ENCODE measurements at regions of chr1 and their contacts with region 1.

Region 1: DNA sequence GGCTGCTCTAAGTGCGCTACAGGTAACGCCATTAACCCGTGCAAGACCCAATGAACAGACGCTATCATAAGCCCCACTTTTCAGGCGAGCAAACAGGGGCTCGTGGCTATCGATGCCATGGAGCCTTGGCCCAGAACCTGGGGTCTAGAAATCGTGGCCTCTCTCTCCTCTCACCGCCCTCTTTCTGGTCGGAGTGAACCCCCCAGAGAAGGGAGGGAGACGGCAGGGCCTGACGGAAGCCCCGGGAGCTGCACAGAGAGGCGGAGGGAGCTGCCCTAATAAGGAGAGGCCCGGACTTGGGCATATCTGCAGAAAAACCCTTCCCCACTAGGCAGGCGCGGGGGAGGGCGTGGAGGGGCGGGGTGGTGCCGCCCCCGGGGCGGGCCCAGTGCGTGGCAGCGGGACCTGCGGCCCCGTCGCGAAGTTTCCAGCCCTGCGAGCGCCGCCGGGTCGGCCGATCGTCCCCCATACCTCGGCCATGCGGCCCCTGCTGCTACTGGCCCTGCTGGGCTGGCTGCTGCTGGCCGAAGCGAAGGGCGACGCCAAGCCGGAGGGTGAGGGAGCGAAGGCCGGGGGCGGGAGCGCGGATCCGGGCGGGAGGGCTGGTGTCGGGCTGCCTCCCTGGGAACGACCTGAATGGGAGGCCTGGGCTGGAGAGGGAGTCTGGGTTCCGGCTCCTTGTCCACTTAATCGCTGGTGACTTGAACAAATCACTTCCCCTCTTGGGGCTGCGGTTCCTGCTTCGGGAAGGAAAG is at the start of gene PLOD1:
- DNase-seq: peak; percentile 85 to 89
- H3K4me3 ChIP-seq: peak within 1 kb of the TSS; percentile 29 to 93 (median 47)
- H3K27ac ChIP-seq: peak within 1 kb of the TSS; percentile 78 to 92 (median 80)
- H3K4me1 ChIP-seq: peaks cover 3 to 37% of the 10 kb centered on the region in 2 donors
- H3K27me3 ChIP-seq: no peaks in the 10 kb centered on the region
- CTCF ChIP-seq: no peak
- POLR2A ChIP-seq: peak in 1 of 2 donors; percentile 87
- total RNA-seq, gene PLOD1: 64.4 to 107 (median 80.8) TPM

Region 2: DNA sequence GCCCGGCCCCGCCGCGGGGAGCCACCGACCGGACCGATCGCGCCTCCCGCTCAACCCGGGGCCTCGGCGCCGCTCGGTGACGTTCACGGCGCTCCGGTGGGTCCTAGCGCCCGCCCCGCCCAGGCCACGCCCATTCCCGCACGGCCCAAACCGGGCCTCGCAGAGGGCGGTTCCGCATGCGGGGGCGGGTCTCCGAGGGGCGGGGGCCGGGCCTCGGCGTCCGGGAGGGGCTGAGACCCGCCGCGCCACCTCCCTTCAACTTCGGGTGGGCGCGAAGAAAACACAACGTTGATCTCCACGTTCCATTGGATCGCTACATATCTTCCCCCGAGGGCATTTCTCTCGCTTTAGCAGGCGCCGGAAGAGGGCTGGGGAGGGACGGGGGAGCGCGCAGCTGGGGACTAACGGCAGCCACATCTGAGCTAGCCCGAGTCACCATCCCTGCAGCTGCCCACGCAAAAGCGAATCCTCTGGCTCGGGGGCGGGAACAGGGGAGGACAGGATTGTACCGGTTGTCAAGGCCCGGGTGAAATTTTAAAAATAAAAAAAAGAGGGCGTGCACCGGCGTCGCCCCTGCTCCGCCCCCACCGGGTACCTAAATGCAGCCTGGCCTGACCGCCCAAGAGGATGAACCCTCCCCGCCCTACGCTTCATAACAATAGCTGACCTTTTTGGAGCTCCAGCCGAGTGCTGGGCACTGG is 253.3 kb before region 1 on chr1 and contains the start of gene MAD2L2:
- intact Hi-C with region 1: no loop called
- DNase-seq: peak; percentile 82
- H3K4me3 ChIP-seq: peak within 1 kb of the TSS; percentile 62 to 83 (median 79)
- H3K27ac ChIP-seq: peak within 1 kb of the TSS; percentile 44 to 74 (median 68)
- H3K4me1 ChIP-seq: peaks cover 7 to 10% of the 10 kb centered on the region in 2 donors
- H3K27me3 ChIP-seq: no peaks in the 10 kb centered on the region
- CTCF ChIP-seq: no peak
- POLR2A ChIP-seq: peak in 1 of 2 donors; percentile 48
- total RNA-seq, gene MAD2L2: 12.0 to 43.9 (median 21.5) TPM

Region 3: DNA sequence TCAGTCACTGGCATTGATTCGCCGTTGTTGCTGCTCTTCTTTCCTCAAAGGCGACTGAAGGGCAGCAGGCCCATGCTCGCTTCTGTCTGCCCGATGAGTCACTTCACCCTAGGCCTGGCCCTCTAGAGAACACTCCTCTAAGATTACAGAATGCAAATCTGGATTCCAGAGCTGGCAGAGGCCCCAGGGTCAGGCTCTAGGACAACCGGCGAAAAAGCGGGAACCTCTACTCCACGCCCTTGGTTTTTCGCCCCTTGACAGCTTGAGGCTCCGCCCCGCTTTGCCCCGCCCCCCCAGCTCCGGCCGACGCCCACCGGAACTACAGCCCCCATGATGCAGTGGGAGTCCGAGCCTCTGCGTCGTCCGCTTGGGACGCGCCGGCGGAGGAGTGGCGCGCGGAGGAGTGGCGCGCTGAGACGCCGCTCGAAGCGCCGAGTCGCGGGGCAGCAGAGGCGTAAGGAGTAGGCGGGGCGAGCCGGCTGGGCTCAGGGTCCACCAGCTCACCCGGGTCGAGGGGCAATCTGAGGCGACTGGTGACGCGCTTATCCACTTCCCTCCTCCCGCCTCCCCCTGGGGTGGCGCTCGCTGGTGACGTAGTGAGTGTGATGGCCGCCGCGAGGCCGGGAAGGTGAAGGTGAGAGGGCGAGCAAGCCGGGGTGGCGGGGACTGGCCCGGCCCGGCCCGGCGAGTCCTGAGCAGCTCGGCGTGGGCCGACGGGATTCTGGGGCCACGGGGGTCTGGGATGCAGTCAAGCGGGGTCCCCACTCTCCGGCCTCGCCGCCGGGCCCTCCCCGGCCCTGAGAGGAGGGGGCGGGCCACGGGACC is 45.6 kb after region 1 on chr1 and contains the start of gene MFN2:
- intact Hi-C with region 1: loop called (anchors 5 kb)
- DNase-seq: peak; percentile 98
- H3K4me3 ChIP-seq: peak within 1 kb of the TSS; percentile 37 to 89 (median 77)
- H3K27ac ChIP-seq: peak within 1 kb of the TSS; percentile 87 to 99 (median 98)
- H3K4me1 ChIP-seq: peaks cover 17 to 24% of the 10 kb centered on the region in 2 donors
- H3K27me3 ChIP-seq: no peaks in the 10 kb centered on the region
- CTCF ChIP-seq: no peak
- POLR2A ChIP-seq: peak in 1 of 2 donors; percentile 77
- total RNA-seq, gene MFN2: 80.0 to 131 (median 111) TPM